ENCODE measurements at regions of chr18 and their contacts with region 1.

Region 1: DNA sequence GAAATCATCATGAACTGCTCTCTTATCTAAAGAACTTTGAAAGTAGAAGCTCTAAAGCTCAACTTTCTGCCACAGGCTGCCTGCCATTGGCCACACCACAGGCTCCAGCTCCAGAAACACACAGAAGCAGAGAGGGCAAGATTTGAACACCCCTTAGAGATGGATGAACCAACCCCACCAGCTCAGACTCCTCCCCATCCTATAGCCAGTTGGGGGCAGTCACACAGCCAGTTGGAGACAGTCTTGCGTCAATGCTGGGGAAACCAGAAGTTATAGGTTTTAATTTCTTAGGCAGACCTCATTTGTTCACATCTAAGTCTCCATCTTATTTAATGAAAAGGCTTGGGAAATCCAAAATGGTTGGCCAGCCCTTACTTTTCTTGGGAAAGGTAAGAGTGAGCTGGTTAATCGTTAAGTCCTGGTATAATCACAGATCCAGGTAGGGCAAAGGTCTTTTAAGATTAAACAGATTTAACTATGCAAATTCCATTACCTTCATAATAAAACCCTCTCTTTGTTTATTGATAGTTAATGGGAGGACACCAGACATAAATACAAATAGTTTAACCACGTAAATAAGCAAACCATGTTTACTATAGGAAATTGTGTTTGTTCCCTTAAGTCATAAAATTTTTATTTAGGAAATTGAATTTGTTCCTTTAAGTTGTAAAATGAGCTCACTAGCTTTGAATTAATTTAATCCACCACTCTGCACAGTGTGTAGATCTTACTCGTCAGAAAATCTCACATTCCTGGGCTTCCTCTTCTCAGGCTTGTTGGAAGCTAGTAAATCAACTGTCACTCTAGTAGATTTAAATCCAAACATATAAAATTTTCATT is 28.0 kb downstream of the MRO start:
- DNase-seq: no peak
- ATAC-seq: no peak
- H3K4me3 Mint-ChIP-seq: no peak overlapping the region
- H3K27ac Mint-ChIP-seq: no peak overlapping the region
- H3K4me1 Mint-ChIP-seq: no peaks in the 10 kb centered on the region
- H3K27me3 Mint-ChIP-seq: peaks cover 10% of the 10 kb centered on the region

Region 2: DNA sequence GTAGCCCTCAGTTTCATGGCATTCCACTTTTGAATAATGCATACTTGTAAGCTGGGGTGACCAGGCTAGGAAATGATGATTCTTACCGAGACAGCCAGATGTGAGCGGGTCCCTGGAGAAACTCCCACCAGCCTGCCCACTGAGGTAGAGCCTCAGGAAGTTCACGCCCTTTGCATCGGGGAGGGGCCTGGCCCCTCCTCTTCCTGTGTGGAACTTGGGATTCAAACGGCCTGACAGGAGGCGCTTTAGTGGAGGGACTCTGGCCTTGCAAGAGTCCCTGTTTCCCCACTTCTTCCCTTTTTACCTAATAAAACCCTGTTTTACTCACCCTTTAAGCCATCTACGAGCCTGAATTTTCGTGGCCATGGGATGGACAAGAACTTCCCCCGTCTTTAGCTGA is 16.6 kb before region 1 on chr18:
- CTCF ChIA-PET with region 1: no interaction called
- POLR2A ChIA-PET with region 1: no interaction called
- intact Hi-C with region 1: no loop called
- DNase-seq: no peak
- ATAC-seq: no peak
- H3K4me3 Mint-ChIP-seq: no peak overlapping the region
- H3K27ac Mint-ChIP-seq: no peak overlapping the region
- H3K4me1 Mint-ChIP-seq: no peaks in the 10 kb centered on the region
- H3K27me3 Mint-ChIP-seq: peaks cover 22% of the 10 kb centered on the region

Region 3: DNA sequence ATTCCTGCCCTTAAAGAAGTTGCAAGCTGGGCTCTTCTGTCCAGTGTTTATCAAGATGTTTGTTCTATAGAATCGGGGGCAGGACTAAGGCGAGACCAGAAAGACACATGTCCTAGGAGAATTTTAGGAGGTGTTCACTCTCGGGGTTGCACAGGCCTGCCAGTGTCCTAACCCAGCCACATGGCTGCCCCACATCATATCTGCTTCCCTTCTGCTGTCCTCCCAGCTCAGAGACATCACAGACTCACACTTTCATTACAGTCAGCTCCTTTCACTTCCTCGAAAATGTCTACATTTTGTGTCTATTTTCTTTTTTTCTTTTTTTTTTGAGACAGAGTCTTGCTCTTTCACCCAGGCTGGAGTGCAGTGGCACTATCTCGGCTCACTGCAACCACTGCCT is 38.7 kb after region 1 on chr18:
- CTCF ChIA-PET with region 1: no interaction called
- POLR2A ChIA-PET with region 1: interaction called, 14 read pairs
- intact Hi-C with region 1: no loop called
- DNase-seq: no peak
- ATAC-seq: no peak
- H3K4me3 Mint-ChIP-seq: no peak overlapping the region
- H3K27ac Mint-ChIP-seq: no peak overlapping the region
- H3K4me1 Mint-ChIP-seq: no peaks in the 10 kb centered on the region
- H3K27me3 Mint-ChIP-seq: no peaks in the 10 kb centered on the region

Region 4: GRCh38 chr18:50902797-50903196 is 111.0 kb after region 1 on chr18:
- CTCF ChIA-PET with region 1: no interaction called
- POLR2A ChIA-PET with region 1: no interaction called
- intact Hi-C with region 1: no loop called
- DNase-seq: no peak
- ATAC-seq: no peak
- H3K4me3 Mint-ChIP-seq: no peak overlapping the region
- H3K27ac Mint-ChIP-seq: no peak overlapping the region
- H3K4me1 Mint-ChIP-seq: peaks cover 37% of the 10 kb centered on the region
- H3K27me3 Mint-ChIP-seq: no peaks in the 10 kb centered on the region

Measured in activated CD4-positive, alpha-beta T cell treated with anti-CD3 and anti-CD28 coated beads for 36 hours (primary cell).